Activated CD4-positive, alpha-beta T cell treated with anti-CD3 and anti-CD28 coated beads, Interleukin-2, amount 10 ng/mL, durations not matched to agents 24 days and 14 days (primary cell): ENCODE measurements at regions of chr2 and their contacts with region 1.

Region 1: GRCh38 chr2:208254871-208255556 is at the start of gene IDH1:
- DNase-seq: peak; percentile 98
- H3K4me3 Mint-ChIP-seq: peak within 1 kb of the TSS; percentile 97
- H3K27ac Mint-ChIP-seq: peak within 1 kb of the TSS; percentile 81
- H3K4me1 Mint-ChIP-seq: peaks cover 20% of the 10 kb centered on the region
- H3K27me3 Mint-ChIP-seq: peaks cover 5% of the 10 kb centered on the region
- total RNA-seq, gene IDH1: 25.4 and 26.0 TPM in 2 replicates

Region 2: GRCh38 chr2:208101716-208102631 is 153.0 kb before region 1 on chr2:
- intact Hi-C with region 1: loop called (anchors 2 kb)
- DNase-seq: no peak
- H3K4me3 Mint-ChIP-seq: no peak overlapping the region
- H3K27ac Mint-ChIP-seq: no peak overlapping the region
- H3K4me1 Mint-ChIP-seq: peaks cover 11% of the 10 kb centered on the region
- H3K27me3 Mint-ChIP-seq: peaks cover 2% of the 10 kb centered on the region

Region 3: DNA sequence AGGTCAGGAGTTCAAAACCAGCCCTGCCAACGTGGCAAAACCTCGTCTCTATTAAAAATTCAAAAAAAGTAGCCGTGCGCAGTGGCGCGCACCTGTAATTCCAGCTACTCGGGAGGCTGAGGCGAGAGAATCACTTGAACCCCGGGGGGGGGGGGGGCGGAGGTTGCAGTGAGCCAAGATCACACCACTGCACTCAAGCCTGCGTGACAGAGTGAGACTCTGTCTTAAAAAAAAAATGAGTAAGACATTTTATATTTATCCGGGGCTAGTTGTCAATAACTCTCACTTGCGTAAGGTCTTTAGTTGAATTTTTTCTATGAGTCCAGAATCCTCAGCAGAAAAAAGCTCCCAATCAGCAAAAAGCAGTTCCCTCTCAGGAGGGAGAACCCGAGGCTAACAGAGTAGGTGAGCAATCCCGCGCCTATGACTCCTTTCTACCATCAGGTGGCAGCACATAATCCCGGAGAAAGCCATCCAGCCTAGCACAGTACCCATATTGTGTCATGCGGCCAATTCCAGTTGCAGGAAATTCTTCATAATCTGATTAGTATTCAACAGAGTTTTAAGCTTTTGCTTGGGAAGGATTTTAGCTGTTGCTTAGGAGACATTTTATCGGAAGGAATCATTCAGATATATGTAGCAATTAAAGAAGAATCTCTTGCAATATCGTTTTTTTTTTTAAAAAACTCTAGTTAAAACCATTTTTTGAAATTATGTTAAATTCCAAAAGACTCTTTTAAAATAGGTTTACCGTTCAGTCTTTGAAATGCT is 79.8 kb before region 1 on chr2:
- intact Hi-C with region 1: loop called (anchors 1 kb)
- DNase-seq: peak; percentile 88
- H3K4me3 Mint-ChIP-seq: no peak overlapping the region
- H3K27ac Mint-ChIP-seq: no peak overlapping the region
- H3K4me1 Mint-ChIP-seq: peaks cover 5% of the 10 kb centered on the region
- H3K27me3 Mint-ChIP-seq: peaks cover 6% of the 10 kb centered on the region

Region 4: DNA sequence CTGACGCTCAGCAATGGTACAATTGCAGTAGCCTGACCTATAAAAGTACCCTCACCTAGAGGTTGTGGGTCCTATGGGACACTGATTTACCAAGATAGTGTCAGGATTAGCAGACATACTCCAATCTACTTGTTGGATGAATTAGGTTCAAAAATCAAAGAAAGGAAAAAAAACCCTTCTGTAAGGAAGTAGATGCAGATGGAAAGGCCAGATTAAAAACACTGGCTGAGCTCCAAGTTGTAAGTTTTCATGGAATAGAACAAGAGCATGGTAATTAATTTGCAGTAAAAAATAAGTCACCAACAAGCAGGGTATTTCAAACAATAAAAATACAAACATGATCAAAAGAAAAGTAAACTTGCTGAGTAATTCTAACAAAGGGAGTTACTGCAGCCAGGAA is 26.5 kb before region 1 on chr2:
- intact Hi-C with region 1: no loop called
- DNase-seq: no peak
- H3K4me3 Mint-ChIP-seq: no peak overlapping the region
- H3K27ac Mint-ChIP-seq: no peak overlapping the region
- H3K4me1 Mint-ChIP-seq: no peaks in the 10 kb centered on the region
- H3K27me3 Mint-ChIP-seq: peaks cover 1% of the 10 kb centered on the region